Activated CD4-positive, alpha-beta T cell treated with anti-CD3 and anti-CD28 coated beads, Interleukin-2, amount 10 ng/mL, durations not matched to agents 24 days and 14 days (primary cell): ENCODE measurements at regions of chr15 and their contacts with region 1.

Region 1: DNA sequence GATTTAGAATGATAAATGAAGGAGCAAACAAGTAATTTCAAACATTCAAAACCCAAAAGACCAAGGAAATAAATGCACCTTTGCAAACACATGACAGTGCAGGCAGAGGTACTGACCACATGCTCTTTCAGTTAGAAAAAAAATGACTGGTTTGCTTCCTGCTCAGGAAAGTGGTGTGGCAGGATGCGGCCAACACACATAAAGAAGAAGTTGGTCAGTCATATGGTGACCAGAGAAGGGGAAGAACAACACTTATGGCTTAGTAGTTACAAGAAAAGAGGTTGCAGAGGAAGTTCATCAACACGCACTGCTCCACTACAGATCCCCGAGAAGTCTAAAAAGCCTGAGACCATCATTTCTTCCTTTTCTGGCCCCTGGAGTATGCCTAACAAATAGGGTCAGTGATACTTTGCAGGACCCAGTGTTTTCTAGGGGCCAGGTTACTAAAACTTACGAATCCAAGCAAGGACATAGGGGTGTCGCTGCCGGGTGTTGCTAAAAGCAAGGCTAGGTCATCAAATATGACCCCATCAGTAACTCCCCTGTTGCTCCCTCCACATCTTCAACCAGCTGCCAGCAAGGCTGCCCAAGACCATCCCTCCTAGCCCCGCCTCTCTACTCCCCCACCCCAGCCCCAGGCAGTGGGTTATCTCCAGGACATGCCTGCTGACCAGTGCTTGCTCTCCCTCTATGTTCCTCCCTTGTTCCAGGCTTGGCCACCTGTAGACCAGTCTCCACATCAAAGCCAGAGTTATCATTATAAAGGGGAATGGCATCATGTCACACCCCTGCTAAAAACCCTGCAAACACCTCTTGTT is 11.2 kb downstream of the ATP8B4 start:
- DNase-seq: peak; percentile 82
- H3K4me3 Mint-ChIP-seq: peak overlapping the region; percentile 79
- H3K27ac Mint-ChIP-seq: peak overlapping the region; percentile 91
- H3K4me1 Mint-ChIP-seq: peaks cover 67% of the 10 kb centered on the region
- H3K27me3 Mint-ChIP-seq: no peaks in the 10 kb centered on the region

Region 2: GRCh38 chr15:49918121-49918520 is 189.7 kb before region 1 on chr15:
- intact Hi-C with region 1: no loop called
- DNase-seq: no peak
- H3K4me3 Mint-ChIP-seq: no peak overlapping the region
- H3K27ac Mint-ChIP-seq: no peak overlapping the region
- H3K4me1 Mint-ChIP-seq: peaks cover 2% of the 10 kb centered on the region
- H3K27me3 Mint-ChIP-seq: no peaks in the 10 kb centered on the region

Region 3: DNA sequence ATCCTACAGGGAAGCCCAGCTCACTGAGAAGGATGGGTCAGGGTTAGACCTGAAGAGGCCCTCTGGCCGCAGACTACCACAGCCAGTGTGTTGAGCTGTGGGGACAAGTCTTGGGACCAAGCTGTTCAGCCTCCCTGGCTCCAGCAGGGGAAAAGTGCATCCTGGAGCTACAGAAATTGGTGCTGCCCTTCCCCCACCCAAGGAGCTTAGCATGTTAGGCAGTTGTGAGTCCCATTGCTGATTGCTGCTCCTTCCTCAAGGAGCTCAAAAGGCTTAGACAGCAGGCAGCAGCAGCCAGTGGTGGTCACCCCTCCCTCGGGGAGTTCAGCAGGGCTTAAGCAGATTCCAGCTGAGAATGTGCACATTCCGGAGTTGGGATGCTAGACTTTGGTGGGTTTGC is 154.4 kb before region 1 on chr15:
- intact Hi-C with region 1: no loop called
- DNase-seq: peak; percentile 37
- H3K4me3 Mint-ChIP-seq: no peak overlapping the region
- H3K27ac Mint-ChIP-seq: no peak overlapping the region
- H3K4me1 Mint-ChIP-seq: no peaks in the 10 kb centered on the region
- H3K27me3 Mint-ChIP-seq: no peaks in the 10 kb centered on the region

Region 4: DNA sequence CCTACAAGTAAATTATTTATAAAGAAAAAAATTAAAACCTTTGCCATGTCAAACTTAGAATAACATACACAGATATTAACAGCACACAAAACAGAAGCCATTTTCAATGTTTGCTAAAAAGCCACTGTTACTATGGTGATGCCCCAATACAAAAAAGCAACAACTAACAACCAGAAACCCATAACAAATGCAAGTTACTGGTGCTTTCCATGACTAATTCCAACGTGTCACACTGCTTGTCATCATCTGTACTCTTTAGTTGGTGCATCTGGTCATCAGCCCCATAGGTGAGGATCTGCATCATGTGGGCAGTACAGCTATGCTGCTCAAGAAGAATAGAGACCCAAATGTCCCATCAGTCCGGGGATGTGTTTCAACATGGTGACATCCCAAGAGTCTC is 41.6 kb before region 1 on chr15:
- intact Hi-C with region 1: loop called (anchors 1 kb)
- DNase-seq: peak; percentile 80
- H3K4me3 Mint-ChIP-seq: peak overlapping the region; percentile 27
- H3K27ac Mint-ChIP-seq: peak overlapping the region; percentile 91
- H3K4me1 Mint-ChIP-seq: peaks cover 38% of the 10 kb centered on the region
- H3K27me3 Mint-ChIP-seq: no peaks in the 10 kb centered on the region

Region 5: GRCh38 chr15:50119063-50120040 is 11.6 kb after region 1 on chr15 and contains the start of gene ATP8B4:
- intact Hi-C with region 1: loop called (anchors 1 kb)
- DNase-seq: peak; percentile 77
- H3K4me3 Mint-ChIP-seq: peak within 1 kb of the TSS; percentile 87
- H3K27ac Mint-ChIP-seq: peak within 1 kb of the TSS; percentile 94
- H3K4me1 Mint-ChIP-seq: peaks cover 44% of the 10 kb centered on the region
- H3K27me3 Mint-ChIP-seq: no peaks in the 10 kb centered on the region
- total RNA-seq, gene ATP8B4: 29.9 and 38.5 TPM in 2 replicates